ENCODE measurements at regions of chr15 and their contacts with region 1.

Region 1: DNA sequence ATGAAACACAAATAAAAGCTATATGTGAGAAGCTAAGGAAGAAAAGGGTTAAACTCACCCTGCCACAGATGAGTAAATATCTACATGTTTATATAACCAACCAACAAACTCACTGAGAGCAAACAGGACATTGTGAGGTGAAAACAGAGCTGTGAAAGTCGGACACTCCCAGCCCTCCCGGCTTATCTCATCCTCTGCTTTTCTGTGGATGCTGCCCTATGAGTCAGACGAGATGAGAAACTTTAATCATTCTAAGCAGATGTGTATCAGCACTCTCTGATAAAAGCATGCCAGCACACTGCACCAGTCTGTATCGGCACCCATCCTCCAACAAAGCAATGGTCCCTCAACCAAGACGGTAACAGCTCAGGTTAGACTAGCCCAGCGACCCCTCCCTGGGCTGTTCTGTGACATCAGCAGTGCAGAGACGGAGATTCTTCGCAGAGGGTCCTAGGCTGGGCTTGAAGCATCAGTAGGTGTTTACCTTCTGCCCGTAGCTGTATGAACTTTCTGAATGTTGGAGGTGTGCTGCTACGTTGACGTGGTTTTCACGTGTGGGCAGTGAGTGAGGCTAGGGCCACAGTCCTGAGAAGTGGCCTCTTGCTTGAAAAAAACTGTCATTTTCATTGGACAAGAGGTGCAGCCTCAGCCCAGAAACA is 119.8 kb upstream of the ALDH1A3 start:
- DNase-seq: peak in 1 of 2 donors; percentile 60
- H3K4me3 ChIP-seq: no peak overlapping the region
- H3K27ac ChIP-seq: peak overlapping the region in 1 of 5 donors; percentile 62
- H3K4me1 ChIP-seq: peaks cover 4 to 17% (median 11%) of the 10 kb centered on the region in 4 donors
- H3K27me3 ChIP-seq: peaks cover 0 to 23% (median 5%) of the 10 kb centered on the region in 3 donors
- CTCF ChIP-seq: no peak
- EP300 ChIP-seq: no peak
- POLR2A ChIP-seq: no peak

Region 2: GRCh38 chr15:100264994-100265673 is 494.7 kb before region 1 on chr15:
- intact Hi-C with region 1: loop called (anchors 5 kb)
- DNase-seq: peak in 1 of 2 donors; percentile 18
- H3K4me3 ChIP-seq: no peak overlapping the region
- H3K27ac ChIP-seq: no peak overlapping the region
- H3K4me1 ChIP-seq: no peaks in the 10 kb centered on the region
- H3K27me3 ChIP-seq: no peaks in the 10 kb centered on the region
- CTCF ChIP-seq: no peak
- EP300 ChIP-seq: no peak
- POLR2A ChIP-seq: no peak

Region 3: GRCh38 chr15:100703032-100703578 is 56.7 kb before region 1 on chr15:
- intact Hi-C with region 1: loop called (anchors 10 kb)
- DNase-seq: no peak
- H3K4me3 ChIP-seq: no peak overlapping the region
- H3K27ac ChIP-seq: no peak overlapping the region
- H3K4me1 ChIP-seq: no peaks in the 10 kb centered on the region
- H3K27me3 ChIP-seq: no peaks in the 10 kb centered on the region
- CTCF ChIP-seq: no peak
- EP300 ChIP-seq: no peak
- POLR2A ChIP-seq: no peak

Measured in stomach (tissue), 19 donors.